HEK293 (cell line): ENCODE measurements at regions of chr12 and their contacts with region 1.

Region 1: GRCh38 chr12:53054112-53054833 is 4.4 kb downstream of the TNS2 start:
- H3K4me3 ChIP-seq: peak overlapping the region; percentile 73
- H3K27ac ChIP-seq: peak overlapping the region; percentile 45; the same call in 1 of the 2 replicates
- H3K4me1 ChIP-seq: peaks cover 24% of the 10 kb centered on the region
- CTCF ChIP-seq: no peak

Region 2: GRCh38 chr12:53005986-53006809 is 48.1 kb before region 1 on chr12 and contains the start of gene EIF4B:
- CTCF ChIA-PET with region 1: interaction called, 3 read pairs
- POLR2A ChIA-PET with region 1: interaction called, 10 read pairs
- H3K4me3 ChIP-seq: peak within 1 kb of the TSS; percentile 65
- H3K27ac ChIP-seq: peak within 1 kb of the TSS; percentile 94
- H3K4me1 ChIP-seq: peaks cover under 1% of the 10 kb centered on the region
- CTCF ChIP-seq: no peak; the same call in 1 of the 2 replicates

Region 3: DNA sequence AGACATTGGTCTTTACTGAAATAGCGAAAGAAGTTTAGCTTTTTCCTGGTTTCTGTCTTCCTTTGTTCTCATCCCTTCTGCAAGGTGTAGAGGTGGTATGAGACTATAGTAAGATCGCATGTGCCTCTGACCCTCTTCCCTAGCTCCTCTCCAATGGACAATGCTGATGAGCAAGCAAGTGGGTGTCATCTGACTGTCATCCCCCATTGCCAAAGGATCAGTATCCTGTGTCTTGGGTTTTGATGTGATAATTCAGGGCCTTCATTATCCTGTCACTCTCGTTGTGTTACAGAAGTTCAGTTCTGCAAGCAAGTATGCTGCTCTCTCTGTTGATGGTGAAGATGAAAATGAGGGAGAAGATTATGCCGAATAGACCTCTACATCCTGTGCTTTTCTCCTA is 14.4 kb before region 1 on chr12:
- CTCF ChIA-PET with region 1: interaction called, 17 read pairs
- POLR2A ChIA-PET with region 1: interaction called, 18 read pairs
- H3K4me3 ChIP-seq: no peak overlapping the region
- H3K27ac ChIP-seq: no peak overlapping the region
- H3K4me1 ChIP-seq: no peaks in the 10 kb centered on the region
- CTCF ChIP-seq: no peak

Region 4: DNA sequence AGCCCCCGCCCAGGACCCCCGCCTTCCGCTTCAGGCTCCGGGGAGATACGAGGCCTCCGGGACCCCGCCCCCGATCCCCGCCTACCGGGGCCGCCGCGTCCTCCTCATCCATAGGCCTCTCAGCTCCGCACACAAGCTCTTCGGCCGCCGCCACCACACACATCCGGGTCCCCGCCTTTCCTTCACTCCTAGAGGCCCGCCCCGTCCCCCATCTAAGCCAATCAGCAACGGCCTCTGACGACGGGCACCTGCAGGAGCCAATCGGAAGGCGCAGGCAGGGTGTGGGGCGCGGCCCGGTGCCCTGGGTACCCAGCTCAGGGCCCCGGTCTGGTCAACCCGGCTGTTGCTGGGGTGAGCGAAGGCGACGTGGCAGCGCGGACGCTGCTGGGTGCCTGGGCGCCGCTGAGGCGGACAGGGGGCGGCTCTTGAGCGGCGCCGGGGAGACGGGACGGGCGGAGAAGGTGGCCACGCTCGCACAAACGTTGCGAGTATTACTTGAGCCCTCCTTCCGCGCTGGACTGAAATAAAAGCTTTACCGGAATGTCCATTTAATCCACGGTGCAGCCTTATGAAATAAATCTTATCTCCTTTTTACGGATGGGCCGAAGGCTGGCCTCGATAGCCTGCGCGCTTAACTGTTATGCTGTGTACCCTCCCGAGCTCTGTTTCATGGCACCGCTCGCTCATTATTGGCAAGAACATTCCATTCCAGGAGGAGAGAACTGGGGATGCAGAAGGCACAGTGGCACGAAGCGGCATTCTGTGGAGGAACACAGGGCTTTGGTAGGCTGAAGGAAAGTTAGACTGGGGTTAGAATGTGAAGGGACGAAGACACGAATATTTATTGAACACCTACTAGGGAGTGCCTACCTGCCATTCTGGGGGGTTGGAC is 25.2 kb after region 1 on chr12 and contains the start of gene SPRYD3:
- CTCF ChIA-PET with region 1: interaction called, 4 read pairs
- POLR2A ChIA-PET with region 1: interaction called, 17 read pairs
- H3K4me3 ChIP-seq: peak within 1 kb of the TSS; percentile 55
- H3K27ac ChIP-seq: peak within 1 kb of the TSS; percentile 85
- H3K4me1 ChIP-seq: peaks cover 2% of the 10 kb centered on the region; the same call in 1 of the 2 replicates
- CTCF ChIP-seq: no peak

Region 5: GRCh38 chr12:53098982-53099651 is 44.8 kb after region 1 on chr12:
- CTCF ChIA-PET with region 1: interaction called, 10 read pairs
- POLR2A ChIA-PET with region 1: no interaction called
- H3K4me3 ChIP-seq: no peak overlapping the region
- H3K27ac ChIP-seq: no peak overlapping the region
- H3K4me1 ChIP-seq: peaks cover 3% of the 10 kb centered on the region; the same call in 1 of the 2 replicates
- CTCF ChIP-seq: peak; percentile 87